OCI-LY7 (cell line): ENCODE measurements at regions of chr13 and their contacts with region 1.

Region 1: GRCh38 chr13:109479991-109480691 is 306.2 kb downstream of the IRS2 start:
- DNase-seq: no peak
- H3K4me3 ChIP-seq: no peak overlapping the region
- H3K27ac ChIP-seq: no peak overlapping the region
- H3K4me1 ChIP-seq: no peaks in the 10 kb centered on the region
- CTCF ChIP-seq: no peak

Region 2: DNA sequence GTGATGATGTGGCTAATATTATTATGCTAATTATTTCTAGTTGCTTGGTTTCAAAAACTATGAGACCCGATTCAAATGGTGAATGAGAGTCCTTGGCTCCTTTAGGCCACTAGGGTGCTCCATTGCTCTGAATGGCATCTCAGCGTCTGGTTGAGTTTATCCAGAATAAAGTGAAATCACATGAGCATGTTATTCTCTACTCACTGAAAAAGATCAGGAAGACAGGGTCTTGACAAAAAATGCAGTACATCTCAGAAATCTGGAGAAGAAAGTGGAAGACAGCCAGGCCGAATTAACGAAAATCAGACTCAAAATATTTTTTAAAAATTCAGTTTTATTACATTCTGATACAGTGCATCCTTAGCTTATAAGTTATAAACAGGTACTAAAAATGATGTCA is 334.5 kb before region 1 on chr13:
- CTCF ChIA-PET with region 1: no interaction called
- POLR2A ChIA-PET with region 1: no interaction called
- intact Hi-C with region 1: loop called (anchors 10 kb)
- DNase-seq: peak; percentile 50
- H3K4me3 ChIP-seq: no peak overlapping the region
- H3K27ac ChIP-seq: no peak overlapping the region
- H3K4me1 ChIP-seq: no peaks in the 10 kb centered on the region
- CTCF ChIP-seq: peak; percentile 82

Region 3: DNA sequence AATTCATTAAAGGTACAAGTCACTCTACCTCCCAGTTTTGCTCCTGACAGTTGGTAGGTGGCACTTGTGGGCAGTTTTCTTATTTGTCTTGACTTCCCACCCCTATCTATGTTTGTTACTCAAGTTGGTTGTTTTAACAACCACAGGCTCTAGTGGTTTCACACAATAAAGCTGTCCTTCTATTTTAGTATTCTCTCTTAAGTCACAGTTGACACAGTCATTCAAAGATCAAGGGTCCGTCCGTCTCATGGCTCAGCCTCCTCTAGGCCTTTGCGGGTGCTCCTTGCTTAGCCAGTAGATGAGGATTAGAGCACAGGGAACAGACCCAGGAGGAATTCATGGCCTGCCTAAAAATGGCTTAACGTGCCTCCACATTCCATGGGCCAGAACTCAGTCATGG is 267.5 kb before region 1 on chr13:
- CTCF ChIA-PET with region 1: no interaction called
- POLR2A ChIA-PET with region 1: no interaction called
- intact Hi-C with region 1: no loop called
- DNase-seq: no peak
- H3K4me3 ChIP-seq: no peak overlapping the region
- H3K27ac ChIP-seq: no peak overlapping the region
- H3K4me1 ChIP-seq: no peaks in the 10 kb centered on the region
- CTCF ChIP-seq: no peak

Region 4: GRCh38 chr13:109465156-109465555 is 15.0 kb before region 1 on chr13:
- CTCF ChIA-PET with region 1: no interaction called
- POLR2A ChIA-PET with region 1: no interaction called
- intact Hi-C with region 1: no loop called
- DNase-seq: no peak
- H3K4me3 ChIP-seq: no peak overlapping the region
- H3K27ac ChIP-seq: no peak overlapping the region
- H3K4me1 ChIP-seq: no peaks in the 10 kb centered on the region
- CTCF ChIP-seq: no peak

Region 5: GRCh38 chr13:109494925-109495345 is 14.8 kb after region 1 on chr13:
- CTCF ChIA-PET with region 1: no interaction called
- POLR2A ChIA-PET with region 1: no interaction called
- intact Hi-C with region 1: no loop called
- DNase-seq: no peak
- H3K4me3 ChIP-seq: no peak overlapping the region
- H3K27ac ChIP-seq: no peak overlapping the region
- H3K4me1 ChIP-seq: no peaks in the 10 kb centered on the region
- CTCF ChIP-seq: no peak